Activated T-helper 1 cell treated with anti-CD3 and anti-CD28 coated beads, Interleukin-12 subunit alpha, Interleukin-12 subunit beta, Interleukin-2, Interleukin-4 antibody, amounts not matched to agents 30 ng/mL and 10 ng/mL and 1 ng/mL, durations not matched to agents 14 hours and 24 hours and 36 hours (primary cell): ENCODE measurements at regions of chr12 and their contacts with region 1.

Region 1: GRCh38 chr12:109573029-109573913 is at the starts of genes MMAB and MVK:
- DNase-seq: peak; percentile 99
- H3K4me3 Mint-ChIP-seq: peak within 1 kb of the TSS; percentile 91
- H3K27ac Mint-ChIP-seq: peak within 1 kb of the TSS; percentile 88
- H3K4me1 Mint-ChIP-seq: peaks cover 30% of the 10 kb centered on the region
- H3K27me3 Mint-ChIP-seq: no peaks in the 10 kb centered on the region
- total RNA-seq, gene MMAB: 41.9 and 42.2 TPM in 2 replicates
- total RNA-seq, gene MVK: 14.2 and 15.8 TPM in 2 replicates

Region 2: GRCh38 chr12:109518820-109519665 is 54.2 kb before region 1 on chr12:
- intact Hi-C with region 1: loop called (anchors 2 kb)
- DNase-seq: peak; percentile 22
- H3K4me3 Mint-ChIP-seq: no peak overlapping the region
- H3K27ac Mint-ChIP-seq: no peak overlapping the region
- H3K4me1 Mint-ChIP-seq: no peaks in the 10 kb centered on the region
- H3K27me3 Mint-ChIP-seq: no peaks in the 10 kb centered on the region

Region 3: GRCh38 chr12:109597795-109598427 is 24.6 kb after region 1 on chr12:
- intact Hi-C with region 1: loop called (anchors 1 kb)
- DNase-seq: peak; percentile 32
- H3K4me3 Mint-ChIP-seq: no peak overlapping the region
- H3K27ac Mint-ChIP-seq: no peak overlapping the region
- H3K4me1 Mint-ChIP-seq: peaks cover 16% of the 10 kb centered on the region
- H3K27me3 Mint-ChIP-seq: peaks cover 8% of the 10 kb centered on the region

Region 4: DNA sequence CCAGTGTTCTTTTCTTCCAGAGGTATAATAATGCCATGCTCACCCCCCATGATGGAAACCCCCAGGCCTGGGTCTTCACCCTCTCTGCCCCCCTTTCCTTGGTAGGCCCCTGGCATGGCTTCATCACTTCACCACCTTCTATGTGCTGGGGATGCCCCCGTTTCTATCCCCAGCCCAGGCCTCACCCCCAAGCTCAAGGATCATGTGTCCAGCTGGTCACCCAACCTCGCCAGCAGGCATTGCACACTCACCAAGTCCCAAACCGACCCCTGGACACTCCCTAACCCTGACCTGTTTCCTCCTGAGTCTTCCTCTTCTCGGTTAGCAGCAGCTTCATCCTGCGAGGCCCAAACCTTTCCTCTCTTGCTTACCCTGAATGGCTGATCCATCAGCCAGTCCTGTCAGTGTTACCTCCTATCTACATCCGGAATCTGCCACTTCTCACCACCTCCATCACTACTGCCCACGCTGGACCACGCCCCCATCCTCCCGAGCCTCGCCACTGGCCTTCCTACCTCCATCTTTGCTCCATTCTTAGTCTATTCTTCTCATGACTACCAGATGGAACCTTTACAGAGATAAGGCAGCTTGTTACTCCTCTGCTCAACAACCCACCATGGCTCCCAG is 69.3 kb after region 1 on chr12:
- intact Hi-C with region 1: no loop called
- DNase-seq: no peak
- H3K4me3 Mint-ChIP-seq: no peak overlapping the region
- H3K27ac Mint-ChIP-seq: no peak overlapping the region
- H3K4me1 Mint-ChIP-seq: no peaks in the 10 kb centered on the region
- H3K27me3 Mint-ChIP-seq: peaks cover 6% of the 10 kb centered on the region

Region 5: DNA sequence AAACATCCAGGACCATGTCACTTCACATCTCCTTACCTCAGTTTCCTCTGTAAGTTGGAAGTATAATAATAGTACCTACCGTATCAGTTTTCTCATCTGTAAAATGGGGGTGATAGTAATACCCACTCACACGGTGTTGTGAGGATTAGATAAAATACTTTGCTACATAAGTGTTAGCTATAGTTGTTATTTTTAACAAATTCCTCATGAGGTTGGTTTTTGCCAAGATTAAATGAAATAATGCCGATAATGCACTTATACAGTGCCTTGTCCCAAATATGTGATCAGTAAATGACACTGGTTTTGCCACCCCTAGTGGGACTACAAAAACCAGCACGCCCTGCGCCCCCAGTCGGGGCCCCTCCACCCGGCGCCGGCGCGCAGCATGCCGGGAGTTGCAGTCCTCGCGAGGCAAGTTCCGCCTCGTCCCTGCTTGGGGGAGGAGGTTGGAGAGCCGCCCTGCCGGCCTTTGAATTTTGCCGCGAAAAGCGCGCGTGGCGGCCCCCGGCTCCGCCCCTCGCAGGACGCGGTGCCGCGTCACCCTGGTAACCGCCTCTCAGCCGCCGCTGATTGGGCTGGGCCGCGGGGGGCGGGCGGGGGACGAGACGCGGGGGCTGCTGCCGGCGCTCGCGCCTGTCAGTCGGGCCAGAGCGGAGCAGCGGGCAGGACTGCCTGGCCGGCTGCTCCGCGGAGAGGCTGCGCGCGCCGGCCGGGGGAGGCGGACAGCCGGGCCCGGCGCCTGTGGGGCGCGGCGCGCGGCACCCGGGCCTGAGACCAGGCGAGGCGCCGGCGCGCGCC is 140.1 kb after region 1 on chr12 and contains the start of gene FAM222A:
- intact Hi-C with region 1: loop called (anchors 1 kb)
- DNase-seq: peak; percentile 94
- H3K4me3 Mint-ChIP-seq: no peak within 1 kb of the TSS
- H3K27ac Mint-ChIP-seq: no peak within 1 kb of the TSS
- H3K4me1 Mint-ChIP-seq: no peaks in the 10 kb centered on the region
- H3K27me3 Mint-ChIP-seq: peaks cover 62% of the 10 kb centered on the region
- total RNA-seq, gene FAM222A: 2.4 TPM in 2 replicates

Region 6: DNA sequence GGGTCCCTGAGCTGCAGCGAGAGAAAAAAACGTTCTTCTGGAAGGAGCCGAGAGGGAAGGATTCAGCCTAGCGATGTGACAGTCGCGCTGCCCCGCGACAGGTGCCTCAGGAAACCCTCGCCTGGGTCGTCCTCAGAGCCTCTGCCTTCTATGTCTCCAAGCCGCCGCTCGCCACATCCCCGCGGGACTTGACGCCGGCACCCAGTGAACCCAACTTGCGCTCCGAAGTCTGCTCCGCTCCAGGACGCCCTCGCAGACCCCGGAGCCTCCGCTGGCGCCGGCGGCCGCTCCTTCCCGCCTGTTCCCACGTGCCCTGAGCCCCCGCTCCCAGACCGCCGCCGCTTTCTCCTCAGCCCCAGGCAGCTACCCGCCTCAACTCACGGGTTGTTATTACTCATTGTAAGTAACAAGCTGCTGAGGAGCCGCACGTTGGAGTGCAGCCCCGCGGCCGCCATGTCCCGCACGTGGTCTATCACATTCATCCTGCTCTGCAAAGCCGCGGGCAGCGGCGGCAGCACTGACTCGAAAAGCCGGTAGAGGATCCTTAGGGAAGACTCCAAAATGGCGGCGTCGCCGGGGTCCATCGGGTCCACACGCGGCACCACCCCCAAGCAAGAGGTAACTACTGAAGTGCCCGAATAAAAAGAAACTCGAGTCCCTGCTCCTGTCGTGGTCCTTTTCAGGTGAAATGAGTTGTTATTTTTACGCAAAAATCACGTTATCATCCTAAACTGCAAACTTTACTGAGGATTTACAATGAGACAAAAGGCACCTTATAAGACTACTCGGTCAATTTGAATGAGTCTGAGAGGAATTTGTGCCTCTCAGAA is 830.1 kb after region 1 on chr12 and contains the start of gene ANAPC7:
- intact Hi-C with region 1: loop called (anchors 5 kb)
- DNase-seq: peak; percentile 81
- H3K4me3 Mint-ChIP-seq: peak within 1 kb of the TSS; percentile 100
- H3K27ac Mint-ChIP-seq: peak within 1 kb of the TSS; percentile 97
- H3K4me1 Mint-ChIP-seq: peaks cover 25% of the 10 kb centered on the region
- H3K27me3 Mint-ChIP-seq: no peaks in the 10 kb centered on the region
- total RNA-seq, gene ANAPC7: 72.0 and 72.6 TPM in 2 replicates